IMR-90 (cell line): ENCODE measurements at regions of chr12 and their contacts with region 1.

Region 1: GRCh38 chr12:121334513-121335343 is 17.5 kb downstream of the ANAPC5 start:
- DNase-seq: peak; percentile 78
- ATAC-seq: peak; percentile 92
- H3K4me3 ChIP-seq: no peak overlapping the region
- H3K27ac ChIP-seq: no peak overlapping the region
- H3K4me1 ChIP-seq: no peaks in the 10 kb centered on the region
- H3K27me3 ChIP-seq: no peaks in the 10 kb centered on the region
- CTCF ChIP-seq: peak; percentile 80
- POLR2A ChIP-seq: no peak
- RAD21 ChIP-seq: peak; percentile 70

Region 2: GRCh38 chr12:121399391-121400331 is 64.9 kb after region 1 on chr12 and contains the start of gene RNF34:
- CTCF ChIA-PET with region 1: interaction called, 3 read pairs
- POLR2A ChIA-PET with region 1: no interaction called
- dilution Hi-C with region 1: no loop called
- in situ Hi-C with region 1: no loop called
- intact Hi-C with region 1: loop called (anchors 5 kb)
- DNase-seq: peak; percentile 97
- ATAC-seq: peak; percentile 98
- H3K4me3 ChIP-seq: peak within 1 kb of the TSS; percentile 65
- H3K27ac ChIP-seq: peak within 1 kb of the TSS; percentile 68
- H3K4me1 ChIP-seq: no peaks in the 10 kb centered on the region; the same call in 1 of the 2 replicates
- H3K27me3 ChIP-seq: no peaks in the 10 kb centered on the region
- CTCF ChIP-seq: no peak
- POLR2A ChIP-seq: peak; percentile 91
- RAD21 ChIP-seq: peak; percentile 17; the same call in 1 of the 2 replicates
- total RNA-seq, gene RNF34: 69.4 and 69.5 TPM in 2 replicates

Region 3: GRCh38 chr12:121427556-121428055 is 92.9 kb after region 1 on chr12:
- CTCF ChIA-PET with region 1: interaction called, 3 read pairs
- POLR2A ChIA-PET with region 1: no interaction called
- dilution Hi-C with region 1: no loop called
- in situ Hi-C with region 1: no loop called
- intact Hi-C with region 1: loop called (anchors 5 kb)
- DNase-seq: no peak
- ATAC-seq: no peak
- H3K4me3 ChIP-seq: no peak overlapping the region
- H3K27ac ChIP-seq: no peak overlapping the region
- H3K4me1 ChIP-seq: no peaks in the 10 kb centered on the region
- H3K27me3 ChIP-seq: no peaks in the 10 kb centered on the region
- CTCF ChIP-seq: no peak
- POLR2A ChIP-seq: no peak
- RAD21 ChIP-seq: no peak

Region 4: DNA sequence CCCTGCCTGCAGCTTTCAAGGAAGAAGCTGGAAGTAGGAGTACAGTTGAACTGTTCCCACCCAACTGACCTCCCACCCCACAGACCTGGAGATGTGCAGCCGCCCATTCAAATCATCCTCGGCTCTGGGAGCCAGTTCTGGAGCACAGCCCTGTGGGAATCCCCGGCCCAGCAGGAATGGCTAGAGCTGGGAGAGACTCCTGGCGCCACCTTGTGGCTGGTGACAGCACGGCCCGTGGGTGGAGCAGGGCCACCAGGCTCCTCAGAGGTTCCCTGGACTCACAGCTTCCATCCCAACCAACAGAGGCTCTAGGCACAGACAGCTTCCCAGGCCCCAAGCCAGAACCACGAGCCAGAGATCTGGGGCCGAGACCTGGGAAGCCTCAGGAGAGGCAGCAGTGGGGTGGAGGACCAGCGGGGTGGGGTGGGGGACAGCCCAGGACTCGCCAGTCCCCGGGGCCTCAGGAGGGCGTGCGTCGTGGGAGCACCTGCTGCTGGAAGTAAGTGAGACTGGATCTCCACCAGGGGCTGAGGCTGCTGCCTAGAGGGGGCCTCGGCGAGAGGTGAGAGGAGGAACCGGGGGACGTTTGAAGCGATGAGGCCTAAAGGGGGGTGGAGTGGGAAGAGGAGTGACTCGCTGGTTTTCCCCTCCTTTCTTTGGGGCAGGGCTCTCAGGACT is 108.6 kb after region 1 on chr12:
- CTCF ChIA-PET with region 1: interaction called, 7 read pairs
- POLR2A ChIA-PET with region 1: no interaction called
- dilution Hi-C with region 1: no loop called
- in situ Hi-C with region 1: no loop called
- intact Hi-C with region 1: loop called (anchors 1 kb)
- DNase-seq: peak; percentile 70
- ATAC-seq: peak; percentile 100
- H3K4me3 ChIP-seq: no peak overlapping the region
- H3K27ac ChIP-seq: no peak overlapping the region
- H3K4me1 ChIP-seq: no peaks in the 10 kb centered on the region
- H3K27me3 ChIP-seq: no peaks in the 10 kb centered on the region
- CTCF ChIP-seq: peak; percentile 92
- POLR2A ChIP-seq: no peak
- RAD21 ChIP-seq: peak; percentile 84